Mucosa of descending colon (tissue), 3 donors: ENCODE measurements at regions of chr7 and their contacts with region 1.

Region 1: DNA sequence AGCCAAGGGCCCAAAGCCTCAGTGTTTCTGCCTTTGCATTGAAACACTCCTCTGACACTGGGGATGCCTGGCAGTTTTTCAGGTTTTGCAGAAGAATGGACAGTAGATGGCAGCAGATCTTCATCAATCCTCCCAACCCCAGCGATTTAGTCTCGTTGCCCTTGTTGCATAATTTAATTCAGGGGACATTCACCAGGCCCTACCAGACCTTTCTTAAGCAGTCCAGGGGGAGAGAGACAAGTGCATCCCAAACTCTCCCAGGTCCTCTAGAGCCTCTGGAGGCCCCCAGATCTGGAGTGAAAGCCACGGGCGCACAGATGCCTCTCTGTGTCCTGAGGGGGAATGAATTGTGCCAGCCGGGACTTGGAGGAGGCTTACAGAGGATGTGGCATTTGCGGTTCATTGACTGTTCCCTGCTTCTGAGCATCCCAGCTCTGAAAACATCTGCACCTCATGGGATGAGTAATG is 29.6 kb downstream of the MINDY4 start:
- DNase-seq: peak in 1 of 3 donors; percentile 73
- ATAC-seq: peak; percentile 71
- H3K4me3 ChIP-seq: no peak overlapping the region
- H3K4me1 ChIP-seq: peaks cover 11% of the 10 kb centered on the region
- CTCF ChIP-seq: peak; percentile 27

Region 2: GRCh38 chr7:30974605-30975255 is 173.9 kb after region 1 on chr7:
- intact Hi-C with region 1: loop called (anchors 5 kb)
- DNase-seq: peak in 2 of 3 donors; percentile 82 to 86
- ATAC-seq: peak; percentile 94
- H3K4me3 ChIP-seq: no peak overlapping the region
- H3K4me1 ChIP-seq: no peaks in the 10 kb centered on the region
- CTCF ChIP-seq: peak; percentile 54

Region 3: GRCh38 chr7:31122649-31123058 is 321.8 kb after region 1 on chr7:
- intact Hi-C with region 1: loop called (anchors 5 to 10 kb)
- DNase-seq: peak in 2 of 3 donors; percentile 60 to 71
- ATAC-seq: peak; percentile 69
- H3K4me3 ChIP-seq: no peak overlapping the region
- H3K4me1 ChIP-seq: no peaks in the 10 kb centered on the region
- CTCF ChIP-seq: peak; percentile 52